ENCODE measurements at regions of chr5 and their contacts with region 1.

Region 1: DNA sequence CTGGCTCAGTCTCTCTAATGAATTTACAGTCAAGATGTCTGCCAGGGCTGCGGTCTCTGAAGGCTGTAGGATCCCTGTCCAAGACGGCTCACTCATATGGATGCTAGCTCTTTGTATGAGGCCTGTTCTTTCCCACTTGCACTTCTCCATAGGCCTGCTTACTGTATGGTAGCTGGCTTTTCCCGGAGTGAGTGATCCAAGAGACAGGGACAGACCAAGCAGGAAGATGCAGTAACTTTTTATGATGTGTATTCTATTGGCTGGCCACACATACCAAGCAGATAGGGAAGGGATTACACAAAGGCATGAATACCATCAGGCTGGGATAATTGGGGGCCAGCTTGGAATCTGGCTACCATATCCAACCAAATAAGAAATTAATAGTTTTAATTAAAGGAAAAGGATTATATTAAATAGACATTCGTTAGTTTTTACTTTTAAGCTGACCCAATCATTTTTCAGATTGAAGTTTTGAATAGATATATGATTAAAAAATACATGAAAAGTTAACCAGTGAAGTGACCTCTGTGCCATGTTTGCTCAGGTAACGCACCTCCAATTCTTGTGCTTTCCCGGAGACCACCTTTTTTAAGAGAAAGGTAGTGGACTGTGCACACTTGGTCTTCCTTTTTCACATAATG is 20.6 kb downstream of the NSD1 start:
- DNase-seq: no peak
- ATAC-seq: peak in 3 of 4 donors; percentile 7 to 26 (median 24)
- H3K4me3 ChIP-seq: no peak overlapping the region
- H3K27ac ChIP-seq: no peak overlapping the region
- H3K4me1 ChIP-seq: peaks cover 16% of the 10 kb centered on the region
- H3K27me3 ChIP-seq: no peaks in the 10 kb centered on the region
- CTCF ChIP-seq: no peak

Region 2: GRCh38 chr5:177133091-177133852 is 20.9 kb before region 1 on chr5 and contains the start of gene NSD1:
- intact Hi-C with region 1: no loop called
- DNase-seq: peak; percentile 92 to 95
- ATAC-seq: peak; percentile 76 to 80 (median 79)
- H3K4me3 ChIP-seq: peak within 1 kb of the TSS; percentile 93
- H3K27ac ChIP-seq: peak within 1 kb of the TSS; percentile 82
- H3K4me1 ChIP-seq: peaks cover 35% of the 10 kb centered on the region
- H3K27me3 ChIP-seq: no peaks in the 10 kb centered on the region
- CTCF ChIP-seq: no peak
- total RNA-seq, gene NSD1: 38.5 to 56.2 (median 43.2) TPM

Region 3: GRCh38 chr5:177171961-177172360 is 17.8 kb after region 1 on chr5:
- intact Hi-C with region 1: loop called in 1 of 2 experiments (anchors 2 kb)
- DNase-seq: no peak
- ATAC-seq: peak in 1 of 4 donors; percentile 43
- H3K4me3 ChIP-seq: no peak overlapping the region
- H3K27ac ChIP-seq: peak overlapping the region; percentile 1
- H3K4me1 ChIP-seq: peaks cover 23% of the 10 kb centered on the region
- H3K27me3 ChIP-seq: no peaks in the 10 kb centered on the region
- CTCF ChIP-seq: no peak

Region 4: DNA sequence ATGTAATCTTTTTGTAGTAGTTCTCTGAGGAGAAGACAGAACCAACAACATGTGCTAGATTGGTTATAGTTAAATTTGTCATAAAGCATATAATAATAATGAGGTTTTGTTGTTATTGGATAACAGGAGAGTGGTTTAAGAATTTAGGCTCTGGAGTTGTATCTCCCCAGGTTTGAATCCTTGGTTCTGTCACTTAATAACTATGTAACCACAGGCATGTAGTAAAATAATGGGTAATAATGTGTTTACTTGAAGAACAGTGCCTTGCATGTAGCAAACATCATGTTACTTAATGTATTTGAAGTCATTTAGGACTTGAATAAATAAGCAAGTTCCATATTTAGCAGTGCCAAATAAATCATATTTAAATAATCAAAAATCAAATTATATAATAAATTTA is 35.3 kb after region 1 on chr5:
- intact Hi-C with region 1: no loop called
- DNase-seq: no peak
- ATAC-seq: no peak
- H3K4me3 ChIP-seq: no peak overlapping the region
- H3K27ac ChIP-seq: no peak overlapping the region
- H3K4me1 ChIP-seq: peaks cover 8% of the 10 kb centered on the region
- H3K27me3 ChIP-seq: no peaks in the 10 kb centered on the region
- CTCF ChIP-seq: no peak

Measured in psoas muscle (tissue), 8 donors.